Spleen (tissue), 13 donors: ENCODE measurements at regions of chr6 and their contacts with region 1.

Region 1: DNA sequence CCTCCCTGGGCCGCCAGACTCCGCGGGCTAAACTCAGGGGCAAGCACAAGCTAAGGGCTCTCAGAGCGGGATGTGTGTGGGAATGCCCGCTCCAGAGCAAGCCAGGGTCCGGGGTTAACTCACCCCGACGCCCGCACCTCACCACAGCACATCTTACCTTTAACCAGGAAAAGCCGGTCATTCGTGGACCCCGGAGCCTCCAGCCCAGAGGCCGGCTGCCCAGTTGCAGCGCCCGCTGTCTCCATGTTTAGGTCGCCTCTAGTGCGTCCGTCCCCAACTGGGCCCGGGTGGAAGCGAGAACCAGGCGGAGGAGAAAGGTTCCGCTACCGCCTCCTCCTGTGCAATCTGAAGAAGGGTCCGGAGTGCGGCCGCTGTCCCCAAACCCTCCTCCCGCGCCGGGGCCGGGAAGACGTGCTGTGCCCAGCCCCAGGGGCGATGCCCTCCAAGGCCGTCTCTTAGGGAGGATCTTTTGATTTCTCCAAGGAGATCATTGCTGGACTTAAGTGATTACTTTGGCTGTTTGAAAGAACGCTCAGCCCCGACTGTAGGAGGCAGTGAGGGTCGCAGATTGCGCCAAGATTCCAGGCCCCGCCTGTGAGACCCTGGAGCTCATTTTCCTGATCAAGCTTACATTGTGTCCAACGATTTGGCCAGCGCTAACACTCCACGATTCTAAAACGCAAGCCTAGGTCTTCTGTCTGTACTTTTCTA is at the start of gene TMEM242:
- DNase-seq: peak; percentile 96
- H3K4me3 ChIP-seq: peak within 1 kb of the TSS; percentile 72 to 96 (median 80)
- H3K27ac ChIP-seq: peak within 1 kb of the TSS; percentile 67 to 94 (median 92)
- H3K4me1 ChIP-seq: peaks cover 12 to 42% (median 24%) of the 10 kb centered on the region in 6 donors
- H3K27me3 ChIP-seq: peaks cover 0 to 7% (median 0%) of the 10 kb centered on the region in 7 donors
- CTCF ChIP-seq: peak in 10 of 11 experiments; percentile 16 to 60 (median 34)
- POLR2A ChIP-seq: peak in 2 of 3 donors; percentile 50 to 61
- total RNA-seq, gene TMEM242: 5.6 to 16.0 (median 9.2) TPM

Region 2: DNA sequence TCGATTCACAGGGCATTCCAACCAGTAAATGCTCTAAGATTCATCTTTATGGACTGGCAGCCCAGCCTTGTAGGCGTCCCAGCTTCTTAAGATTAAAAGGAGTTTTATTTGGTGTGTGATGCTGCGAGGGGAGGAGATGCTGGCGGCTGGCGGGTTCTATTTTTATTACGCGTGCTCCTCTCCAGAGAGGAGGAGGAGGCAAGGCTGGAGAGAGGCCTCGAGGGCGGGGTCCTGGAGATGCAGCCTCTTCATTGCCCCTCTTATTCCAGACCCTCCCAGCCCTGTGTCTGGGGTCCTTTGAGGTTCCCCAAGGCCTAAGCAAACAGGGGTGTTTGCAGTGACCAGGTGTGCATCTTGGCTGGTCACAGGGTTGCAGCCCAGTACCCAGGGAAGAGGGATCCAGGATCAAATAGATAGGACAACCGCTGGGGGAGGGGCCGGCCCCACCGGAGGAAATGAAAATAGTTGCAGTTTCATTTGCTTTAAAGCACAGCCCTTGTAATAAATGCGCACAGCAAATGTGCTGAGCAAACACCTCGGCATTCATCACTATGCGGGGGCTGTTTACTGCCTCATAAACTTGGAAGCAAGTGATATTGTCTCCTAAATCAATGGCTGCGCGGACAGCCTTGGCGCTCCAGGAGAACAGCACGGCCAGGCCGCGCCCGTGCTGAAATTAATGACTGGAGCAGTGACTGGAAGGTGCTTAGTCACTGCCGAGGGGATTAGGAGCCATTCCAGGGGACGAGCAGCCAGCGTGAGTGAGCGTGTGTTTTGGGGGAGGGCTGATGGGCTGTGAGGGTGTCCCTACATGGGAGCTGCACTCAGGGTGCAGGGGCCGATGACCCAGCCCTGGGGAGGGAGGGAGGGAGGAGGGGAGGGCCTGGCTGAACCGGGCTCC is 83.1 kb before region 1 on chr6:
- intact Hi-C with region 1: no loop called
- DNase-seq: peak; percentile 61
- H3K4me3 ChIP-seq: peak overlapping the region in 5 of 8 donors; percentile 10 to 51 (median 21)
- H3K27ac ChIP-seq: peak overlapping the region in 7 of 8 donors; percentile 39 to 70 (median 63)
- H3K4me1 ChIP-seq: peaks cover 3 to 33% (median 20%) of the 10 kb centered on the region in 6 donors
- H3K27me3 ChIP-seq: peaks cover 2 to 50% (median 22%) of the 10 kb centered on the region in 7 donors
- CTCF ChIP-seq: no peak
- POLR2A ChIP-seq: no peak

Region 3: DNA sequence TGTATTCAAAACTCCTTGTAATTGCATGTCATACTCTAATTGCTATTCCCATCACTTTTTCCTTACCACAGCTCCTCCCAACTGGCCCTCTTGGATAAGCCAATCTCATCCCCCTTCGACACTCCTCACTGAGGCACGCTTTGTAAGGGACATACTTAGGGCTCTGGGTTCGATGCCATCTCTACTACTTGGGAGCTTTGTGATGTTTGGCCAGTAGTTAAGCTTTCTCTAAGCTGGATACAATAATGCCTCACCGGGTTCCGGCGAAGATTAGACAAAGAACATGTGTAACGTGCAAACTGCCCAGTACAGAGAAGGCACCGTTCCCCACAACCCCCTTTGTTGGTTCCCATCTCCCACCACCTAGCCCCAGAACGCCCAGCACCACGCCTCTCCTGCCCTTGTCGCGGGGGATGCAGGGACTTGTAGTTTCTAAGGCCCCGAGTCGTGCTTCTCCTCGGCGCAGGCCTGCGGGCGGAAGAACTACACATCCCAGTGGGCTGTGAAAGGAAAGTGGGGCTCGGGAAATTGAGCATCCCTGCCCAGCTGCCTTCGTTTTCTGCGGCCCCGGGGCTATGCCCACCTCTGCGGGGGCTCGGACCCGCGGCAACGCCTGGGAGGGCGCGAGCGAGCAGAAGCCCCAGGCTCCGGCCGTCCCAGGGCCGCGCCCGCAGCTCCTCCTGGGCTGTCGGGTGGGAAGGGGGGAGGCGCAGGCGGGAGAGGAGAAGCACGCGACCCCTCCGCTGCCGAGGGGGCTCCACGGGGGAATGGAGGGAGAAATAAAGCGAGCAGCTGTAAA is 56.4 kb after region 1 on chr6:
- intact Hi-C with region 1: loop called (anchors 10 kb)
- DNase-seq: peak; percentile 96
- H3K4me3 ChIP-seq: peak overlapping the region; percentile 79 to 100 (median 97)
- H3K27ac ChIP-seq: peak overlapping the region; percentile 90 to 97 (median 94)
- H3K4me1 ChIP-seq: peaks cover 4 to 42% (median 24%) of the 10 kb centered on the region in 6 donors
- H3K27me3 ChIP-seq: peaks cover 0 to 6% (median 0%) of the 10 kb centered on the region in 7 donors
- CTCF ChIP-seq: no peak
- POLR2A ChIP-seq: peak in 1 of 3 donors; percentile 6

Region 4: DNA sequence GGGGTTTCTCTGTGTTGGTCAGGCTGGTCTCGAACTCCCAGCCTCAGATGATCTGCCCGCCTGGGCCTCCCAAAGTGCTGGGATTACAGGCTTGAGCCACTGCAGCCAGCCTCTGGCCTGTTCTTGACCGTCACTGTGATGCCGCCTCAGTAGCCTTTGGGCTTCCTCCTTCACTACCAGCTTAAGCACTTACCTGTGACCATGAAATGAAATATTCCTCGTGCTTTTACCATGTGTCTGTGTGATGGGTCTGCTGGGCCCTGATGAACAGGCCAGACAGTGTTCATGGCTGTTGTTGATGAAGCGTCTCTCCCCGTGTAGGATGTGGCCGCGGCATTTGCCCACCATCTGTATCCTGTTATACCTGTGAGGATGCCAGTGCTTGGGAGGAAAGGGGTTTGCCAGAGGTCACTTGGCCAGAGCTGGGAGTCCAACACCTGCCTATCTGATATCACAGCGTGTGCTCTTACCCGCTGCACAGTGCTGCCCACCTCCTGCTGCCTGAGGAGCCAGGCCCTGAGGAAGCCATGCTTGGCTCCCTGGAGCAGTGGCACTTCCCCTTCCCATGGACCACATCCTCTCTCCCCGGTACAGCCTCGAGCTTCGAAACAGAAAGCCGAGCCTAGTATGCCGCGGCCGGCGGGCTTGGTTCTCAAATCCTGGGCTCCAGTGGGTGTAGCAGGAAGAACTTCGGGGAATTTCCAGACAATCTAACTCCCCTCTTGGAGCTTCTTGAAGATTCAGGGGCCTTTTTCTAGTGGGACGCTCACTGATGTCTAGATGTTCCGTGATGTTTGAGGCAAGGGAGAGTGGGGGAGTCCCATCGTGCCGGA is 225.4 kb after region 1 on chr6:
- intact Hi-C with region 1: no loop called
- DNase-seq: peak; percentile 86
- H3K4me3 ChIP-seq: peak overlapping the region in 4 of 8 donors; percentile 14 to 53 (median 23)
- H3K27ac ChIP-seq: peak overlapping the region; percentile 4 to 76 (median 64)
- H3K4me1 ChIP-seq: peaks cover 22 to 37% (median 27%) of the 10 kb centered on the region in 6 donors
- H3K27me3 ChIP-seq: no peaks in the 10 kb centered on the region
- CTCF ChIP-seq: no peak
- POLR2A ChIP-seq: no peak